Left cardiac atrium (tissue), 4 donors: ENCODE measurements at regions of chrX and their contacts with region 1.

Region 1: GRCh38 chrX:74382613-74383012 is 38.7 kb upstream of the SLC16A2 start:
- DNase-seq: peak; percentile 68
- ATAC-seq: peak; percentile 89 to 92

Region 2: DNA sequence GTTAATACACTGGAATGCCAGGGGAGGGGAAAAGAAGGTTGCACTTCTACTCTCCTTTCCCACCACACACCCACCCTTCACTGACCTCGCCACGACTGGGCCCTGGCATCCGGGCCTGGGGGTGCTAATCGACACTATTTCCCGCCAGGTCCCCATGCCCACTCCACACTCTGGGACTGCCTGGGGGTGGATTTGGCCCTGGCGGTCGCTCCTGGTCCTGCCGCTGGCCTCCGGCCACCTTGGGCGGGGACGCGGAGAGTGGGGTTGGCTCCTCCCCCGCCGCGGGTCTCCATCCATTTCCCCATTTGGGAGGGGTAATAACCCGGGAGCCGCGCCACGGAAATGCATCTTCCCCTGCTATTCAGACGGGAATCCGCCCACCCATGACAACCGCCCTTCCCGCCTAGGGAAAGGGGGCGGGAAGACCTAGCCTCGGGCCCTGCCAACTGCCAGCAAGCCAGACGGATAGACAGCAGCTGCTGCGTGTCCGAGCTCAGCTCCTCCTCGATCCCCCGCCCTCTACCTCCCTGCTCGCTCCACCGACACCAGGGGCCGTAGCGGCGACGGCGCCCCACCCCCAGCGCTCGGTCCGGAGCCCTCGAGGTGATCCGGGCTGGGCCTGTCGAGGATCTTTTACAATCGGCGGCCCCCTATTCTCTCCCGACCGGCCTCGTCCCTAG is 153.7 kb after region 1 on chrX:
- intact Hi-C with region 1: loop called in 1 of 2 experiments (anchors 10 kb)
- DNase-seq: peak; percentile 90
- ATAC-seq: peak; percentile 90 to 94

Region 3: GRCh38 chrX:74550295-74550802 is 167.7 kb after region 1 on chrX:
- intact Hi-C with region 1: loop called in 1 of 2 experiments (anchors 1 kb)
- DNase-seq: peak; percentile 88
- ATAC-seq: peak; percentile 91 to 95

Region 4: DNA sequence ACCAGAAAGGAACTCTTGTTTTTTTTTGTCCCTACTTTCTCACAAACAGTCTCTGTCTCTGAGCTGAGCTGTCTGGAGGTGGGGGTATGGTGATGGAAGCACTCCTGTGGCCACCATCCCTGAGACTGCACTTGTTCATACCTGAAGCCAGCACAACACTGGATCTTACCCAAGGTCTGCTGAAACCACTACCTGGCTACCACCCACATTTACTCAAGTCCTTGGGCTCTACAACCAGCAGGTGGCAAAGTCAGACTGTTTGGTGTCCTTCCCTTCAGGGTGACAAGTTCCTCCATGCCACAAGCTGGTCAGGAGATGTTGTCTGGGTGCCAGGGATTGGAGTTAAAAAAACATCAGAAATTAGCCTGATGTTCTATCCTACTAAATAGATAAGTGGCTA is 453.0 kb after region 1 on chrX:
- intact Hi-C with region 1: no loop called
- DNase-seq: no peak
- ATAC-seq: no peak